Natural killer cell (primary cell): ENCODE measurements at regions of chr11 and their contacts with region 1.

Region 1: GRCh38 chr11:69000831-69001242 is 12.2 kb downstream of the MRGPRF start:
- DNase-seq: no peak
- ATAC-seq: no peak
- H3K4me3 ChIP-seq: no peak overlapping the region
- H3K4me3 Mint-ChIP-seq: no peak overlapping the region
- H3K27ac ChIP-seq: no peak overlapping the region
- H3K27ac Mint-ChIP-seq: peak overlapping the region in 1 of 2 donors; percentile 89
- H3K4me1 ChIP-seq: peaks cover 25% of the 10 kb centered on the region
- H3K4me1 Mint-ChIP-seq: peaks cover 20 to 29% of the 10 kb centered on the region in 2 donors
- H3K27me3 ChIP-seq: no peaks in the 10 kb centered on the region
- H3K27me3 Mint-ChIP-seq: peaks cover 10% of the 10 kb centered on the region in 2 donors
- CTCF ChIP-seq: no peak

Region 2: DNA sequence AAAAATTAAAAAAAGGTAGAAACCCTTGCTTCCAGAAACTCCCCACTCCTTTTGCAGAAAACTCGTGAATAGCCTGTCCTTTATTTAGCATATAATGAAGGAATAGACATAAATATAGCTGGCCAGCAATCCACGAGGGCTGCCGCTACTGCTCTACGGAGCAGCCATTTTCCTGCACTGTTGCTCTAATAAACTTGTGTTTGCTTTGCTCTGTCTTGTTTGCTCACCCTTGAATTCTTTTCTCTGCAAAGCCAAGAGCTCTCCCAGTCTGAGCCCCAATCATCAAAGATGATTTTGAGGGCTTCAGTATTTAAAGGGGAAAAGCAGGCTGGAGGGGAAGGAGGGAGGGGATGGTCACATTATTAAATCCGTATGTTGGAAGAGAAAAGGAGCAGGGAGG is 863.0 kb before region 1 on chr11:
- intact Hi-C with region 1: no loop called
- DNase-seq: no peak
- ATAC-seq: no peak
- H3K4me3 ChIP-seq: no peak overlapping the region
- H3K4me3 Mint-ChIP-seq: no peak overlapping the region
- H3K27ac ChIP-seq: no peak overlapping the region
- H3K27ac Mint-ChIP-seq: no peak overlapping the region
- H3K4me1 ChIP-seq: peaks cover 17% of the 10 kb centered on the region
- H3K4me1 Mint-ChIP-seq: peaks cover 0 to 8% of the 10 kb centered on the region in 2 donors
- H3K27me3 ChIP-seq: no peaks in the 10 kb centered on the region
- H3K27me3 Mint-ChIP-seq: peaks cover 2 to 6% of the 10 kb centered on the region in 2 donors
- CTCF ChIP-seq: no peak

Region 3: DNA sequence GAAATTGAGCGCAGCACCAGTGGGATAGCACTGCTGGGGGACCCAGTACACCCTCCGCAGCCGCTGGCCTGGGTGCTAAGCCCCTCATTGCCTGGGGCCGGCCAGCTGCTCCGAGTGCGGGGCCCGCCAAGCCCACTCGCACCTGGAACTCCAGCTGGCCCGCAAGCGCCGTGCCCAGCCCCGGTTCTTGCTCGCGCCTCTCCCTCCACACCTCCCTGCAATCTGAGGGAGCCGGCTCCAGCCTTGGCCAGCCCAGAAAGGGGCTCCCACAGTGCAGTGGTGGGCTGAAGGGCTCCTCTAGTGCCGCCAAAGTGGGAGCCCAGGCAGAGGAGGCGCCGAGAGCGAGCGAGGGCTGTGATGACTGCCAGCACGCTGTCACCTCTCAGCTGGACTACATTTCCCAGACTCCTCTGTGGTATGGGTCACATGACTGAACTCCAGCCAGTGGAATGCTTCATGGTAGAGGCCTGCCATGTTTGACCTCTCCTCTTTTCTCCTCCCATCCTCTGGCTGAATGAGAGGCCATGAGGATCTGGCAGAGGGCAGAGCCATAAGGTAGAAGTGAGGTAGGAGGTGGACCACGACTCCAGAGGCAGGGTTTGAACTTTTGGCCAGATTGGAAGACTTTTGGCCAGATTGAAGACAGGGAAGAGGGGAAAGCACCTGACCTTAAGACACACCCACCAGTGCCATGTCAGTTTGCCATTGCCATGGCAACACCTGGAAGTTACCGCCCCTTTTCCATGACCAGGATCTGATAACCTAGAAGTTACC is 26.2 kb before region 1 on chr11:
- intact Hi-C with region 1: no loop called
- DNase-seq: peak in 1 of 2 donors; percentile 35
- ATAC-seq: peak in 2 of 3 donors; percentile 67
- H3K4me3 ChIP-seq: no peak overlapping the region
- H3K4me3 Mint-ChIP-seq: no peak overlapping the region
- H3K27ac ChIP-seq: no peak overlapping the region
- H3K27ac Mint-ChIP-seq: no peak overlapping the region
- H3K4me1 ChIP-seq: no peaks in the 10 kb centered on the region
- H3K4me1 Mint-ChIP-seq: no peaks in the 10 kb centered on the region
- H3K27me3 ChIP-seq: no peaks in the 10 kb centered on the region
- H3K27me3 Mint-ChIP-seq: peaks cover 0 to 2% of the 10 kb centered on the region in 2 donors
- CTCF ChIP-seq: no peak

Region 4: DNA sequence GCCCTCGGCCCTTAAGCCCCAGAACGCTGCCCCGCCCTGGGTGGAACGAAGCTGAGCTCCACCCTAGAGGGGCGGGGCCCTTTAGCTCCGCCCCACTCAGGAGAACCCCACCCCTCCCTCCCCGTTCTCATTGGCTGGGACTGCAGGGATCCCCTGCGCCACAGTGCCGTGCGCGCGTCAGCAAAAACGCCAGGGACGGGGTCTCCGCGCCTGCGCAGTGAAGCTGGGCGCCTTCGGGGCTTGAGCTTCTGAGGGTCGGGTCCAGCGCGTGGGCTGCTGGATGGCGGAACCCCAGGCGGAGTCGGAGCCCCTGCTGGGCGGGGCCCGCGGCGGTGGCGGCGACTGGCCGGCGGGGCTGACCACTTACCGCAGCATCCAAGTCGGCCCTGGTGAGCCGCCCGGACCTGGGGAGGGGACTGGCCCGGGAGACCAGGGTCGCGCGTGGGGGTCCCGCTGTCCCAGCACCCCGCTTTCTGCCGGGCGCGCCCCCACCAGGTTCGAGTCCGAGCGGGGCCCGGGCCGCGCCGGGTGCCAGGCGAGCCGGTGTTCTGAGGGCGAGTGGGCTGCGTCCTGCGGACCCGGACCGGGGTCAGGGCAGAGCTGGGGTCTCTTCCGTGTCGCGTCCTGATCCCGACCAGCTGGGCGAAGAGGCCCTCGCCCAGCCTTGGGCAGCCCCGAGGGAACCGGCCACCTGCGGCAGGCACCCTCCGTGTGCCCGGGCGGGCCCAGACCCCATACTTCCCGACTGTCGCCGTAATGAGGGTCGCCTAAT is 48.1 kb after region 1 on chr11 and contains the start of gene TPCN2:
- intact Hi-C with region 1: loop called (anchors 2 kb)
- DNase-seq: peak; percentile 82 to 98
- ATAC-seq: peak; percentile 96 to 98 (median 98)
- H3K4me3 ChIP-seq: peak within 1 kb of the TSS; percentile 58
- H3K4me3 Mint-ChIP-seq: peak within 1 kb of the TSS; percentile 81
- H3K27ac ChIP-seq: peak within 1 kb of the TSS; percentile 59
- H3K27ac Mint-ChIP-seq: peak within 1 kb of the TSS; percentile 77 to 83
- H3K4me1 ChIP-seq: peaks cover 53% of the 10 kb centered on the region
- H3K4me1 Mint-ChIP-seq: peaks cover 13 to 20% of the 10 kb centered on the region in 2 donors
- H3K27me3 ChIP-seq: no peaks in the 10 kb centered on the region
- H3K27me3 Mint-ChIP-seq: peaks cover 2 to 29% of the 10 kb centered on the region in 2 donors
- CTCF ChIP-seq: no peak
- total RNA-seq, gene TPCN2: 14.9 to 18.3 (median 18.2) TPM

Region 5: GRCh38 chr11:69055598-69056516 is 55.0 kb after region 1 on chr11:
- intact Hi-C with region 1: loop called (anchors 1 kb)
- DNase-seq: peak; percentile 59 to 67
- ATAC-seq: peak; percentile 78 to 89 (median 78)
- H3K4me3 ChIP-seq: no peak overlapping the region
- H3K4me3 Mint-ChIP-seq: peak overlapping the region; percentile 17
- H3K27ac ChIP-seq: peak overlapping the region; percentile 90
- H3K27ac Mint-ChIP-seq: peak overlapping the region; percentile 78 to 85
- H3K4me1 ChIP-seq: peaks cover 77% of the 10 kb centered on the region
- H3K4me1 Mint-ChIP-seq: peaks cover 19 to 39% of the 10 kb centered on the region in 2 donors
- H3K27me3 ChIP-seq: no peaks in the 10 kb centered on the region
- H3K27me3 Mint-ChIP-seq: no peaks in the 10 kb centered on the region
- CTCF ChIP-seq: no peak

Region 6: GRCh38 chr11:69088676-69089146 is 87.9 kb after region 1 on chr11:
- intact Hi-C with region 1: loop called (anchors 10 kb)
- DNase-seq: peak; percentile 49 to 74
- ATAC-seq: peak; percentile 64 to 88 (median 78)
- H3K4me3 ChIP-seq: no peak overlapping the region
- H3K4me3 Mint-ChIP-seq: no peak overlapping the region
- H3K27ac ChIP-seq: no peak overlapping the region
- H3K27ac Mint-ChIP-seq: no peak overlapping the region
- H3K4me1 ChIP-seq: peaks cover 5% of the 10 kb centered on the region
- H3K4me1 Mint-ChIP-seq: peaks cover 0 to 8% of the 10 kb centered on the region in 2 donors
- H3K27me3 ChIP-seq: no peaks in the 10 kb centered on the region
- H3K27me3 Mint-ChIP-seq: no peaks in the 10 kb centered on the region
- CTCF ChIP-seq: peak; percentile 64